ENCODE measurements at regions of chr16 and their contacts with region 1.

Region 1: GRCh38 chr16:88452482-88453216 is 431 bp upstream of the ZFPM1 start:
- DNase-seq: peak; percentile 99
- ATAC-seq: peak; percentile 71
- H3K4me3 Mint-ChIP-seq: peak overlapping the region; percentile 76
- H3K27ac Mint-ChIP-seq: peak overlapping the region; percentile 90
- H3K4me1 Mint-ChIP-seq: peaks cover 24% of the 10 kb centered on the region
- H3K27me3 Mint-ChIP-seq: no peaks in the 10 kb centered on the region
- CTCF ChIP-seq: no peak

Region 2: DNA sequence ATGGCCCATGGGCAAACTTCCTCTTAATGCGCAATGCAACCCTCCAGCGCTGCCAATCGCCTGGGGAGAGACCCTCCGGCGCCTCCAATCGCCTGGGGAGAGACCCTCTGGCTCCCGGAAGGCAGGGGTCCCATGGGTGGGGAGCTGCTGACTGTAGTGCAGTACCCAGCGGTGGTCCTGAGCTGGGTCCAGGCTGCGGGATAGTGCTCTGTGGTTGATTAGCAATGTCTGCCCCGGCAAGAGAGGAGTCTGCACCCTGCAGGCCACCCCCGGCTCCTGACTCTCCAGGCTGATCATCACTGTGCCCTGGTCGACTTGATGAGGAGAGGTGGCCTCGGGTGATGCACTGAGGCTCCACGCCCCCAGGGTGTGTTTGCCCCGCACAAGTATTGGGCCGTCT is 114.5 kb before region 1 on chr16:
- CTCF ChIA-PET with region 1: no interaction called
- POLR2A ChIA-PET with region 1: no interaction called
- intact Hi-C with region 1: no loop called
- DNase-seq: no peak
- ATAC-seq: no peak
- H3K4me3 Mint-ChIP-seq: no peak overlapping the region
- H3K27ac Mint-ChIP-seq: no peak overlapping the region
- H3K4me1 Mint-ChIP-seq: peaks cover 7% of the 10 kb centered on the region
- H3K27me3 Mint-ChIP-seq: peaks cover 8% of the 10 kb centered on the region
- CTCF ChIP-seq: no peak

Region 3: GRCh38 chr16:88527186-88527936 is 74.7 kb after region 1 on chr16:
- CTCF ChIA-PET with region 1: interaction called, 3 read pairs
- POLR2A ChIA-PET with region 1: interaction called, 3 read pairs
- intact Hi-C with region 1: loop called (anchors 5 kb)
- DNase-seq: peak; percentile 71
- ATAC-seq: peak; percentile 82
- H3K4me3 Mint-ChIP-seq: no peak overlapping the region
- H3K27ac Mint-ChIP-seq: no peak overlapping the region
- H3K4me1 Mint-ChIP-seq: no peaks in the 10 kb centered on the region
- H3K27me3 Mint-ChIP-seq: no peaks in the 10 kb centered on the region
- CTCF ChIP-seq: peak; percentile 85

Measured in activated CD8-positive, alpha-beta T cell treated with anti-CD3 and anti-CD28 coated beads for 36 hours (primary cell).